Heart left ventricle (tissue), 16 donors: ENCODE measurements at regions of chr15 and their contacts with region 1.

Region 1: GRCh38 chr15:31752065-31752762 is 278.1 kb upstream of the CHRNA7 start:
- DNase-seq: no peak
- ATAC-seq: no peak
- H3K4me3 ChIP-seq: no peak overlapping the region
- H3K27ac ChIP-seq: no peak overlapping the region
- H3K4me1 ChIP-seq: no peaks in the 10 kb centered on the region
- H3K27me3 ChIP-seq: no peaks in the 10 kb centered on the region
- CTCF ChIP-seq: no peak
- POLR2A ChIP-seq: no peak

Region 2: DNA sequence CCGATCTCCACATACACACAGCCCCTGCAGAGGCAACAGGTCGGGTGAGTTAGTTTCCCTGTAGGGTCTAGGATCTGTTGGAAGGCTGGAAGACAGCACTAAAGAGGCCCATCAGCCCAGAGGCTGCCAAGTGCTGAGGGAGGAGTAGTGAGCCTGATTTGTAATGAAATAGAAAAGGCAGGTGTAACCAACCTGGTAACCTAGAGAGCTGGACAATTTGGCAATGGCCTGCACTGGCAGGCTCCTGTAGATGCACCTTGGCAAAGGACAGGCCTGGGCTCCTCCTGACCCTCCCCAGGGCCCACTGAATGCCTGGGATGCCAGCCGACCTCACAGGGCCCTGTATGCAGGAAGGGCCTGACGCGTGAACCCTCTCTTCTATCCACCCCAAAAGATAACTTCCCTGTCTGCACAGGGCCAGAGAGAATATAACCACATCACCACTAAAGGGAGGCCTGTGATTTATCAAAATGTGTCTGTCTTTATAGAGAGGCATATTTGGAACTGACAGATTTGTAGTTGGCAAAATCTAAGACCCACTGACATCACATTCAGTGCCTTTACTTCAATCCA is 53.0 kb after region 1 on chr15:
- intact Hi-C with region 1: loop called in 1 of 10 experiments (anchors 5 kb)
- DNase-seq: no peak
- ATAC-seq: peak in 3 of 4 donors; percentile 39 to 74 (median 47)
- H3K4me3 ChIP-seq: no peak overlapping the region
- H3K27ac ChIP-seq: no peak overlapping the region
- H3K4me1 ChIP-seq: peaks cover 0 to 21% (median 6%) of the 10 kb centered on the region in 12 donors
- H3K27me3 ChIP-seq: no peaks in the 10 kb centered on the region
- CTCF ChIP-seq: no peak
- POLR2A ChIP-seq: no peak